ENCODE measurements at regions of chr6 and their contacts with region 1.

Region 1: GRCh38 chr6:86218446-86218845 is 575.8 kb upstream of the SYNCRIP start:
- DNase-seq: no peak
- ATAC-seq: no peak
- H3K4me3 ChIP-seq: no peak overlapping the region
- H3K4me3 Mint-ChIP-seq: no peak overlapping the region
- H3K27ac ChIP-seq: no peak overlapping the region
- H3K27ac Mint-ChIP-seq: no peak overlapping the region
- H3K4me1 ChIP-seq: no peaks in the 10 kb centered on the region
- H3K4me1 Mint-ChIP-seq: no peaks in the 10 kb centered on the region
- H3K27me3 ChIP-seq: no peaks in the 10 kb centered on the region
- H3K27me3 Mint-ChIP-seq: no peaks in the 10 kb centered on the region
- CTCF ChIP-seq: no peak

Region 2: GRCh38 chr6:86203044-86203443 is 15.4 kb before region 1 on chr6:
- CTCF ChIA-PET with region 1: no interaction called
- POLR2A ChIA-PET with region 1: no interaction called
- intact Hi-C with region 1: no loop called
- DNase-seq: no peak
- ATAC-seq: no peak
- H3K4me3 ChIP-seq: no peak overlapping the region
- H3K4me3 Mint-ChIP-seq: no peak overlapping the region
- H3K27ac ChIP-seq: no peak overlapping the region
- H3K27ac Mint-ChIP-seq: no peak overlapping the region
- H3K4me1 ChIP-seq: no peaks in the 10 kb centered on the region
- H3K4me1 Mint-ChIP-seq: no peaks in the 10 kb centered on the region
- H3K27me3 ChIP-seq: no peaks in the 10 kb centered on the region
- H3K27me3 Mint-ChIP-seq: peaks cover 1% of the 10 kb centered on the region
- CTCF ChIP-seq: no peak

Region 3: GRCh38 chr6:86256615-86257187 is 38.3 kb after region 1 on chr6:
- CTCF ChIA-PET with region 1: no interaction called
- POLR2A ChIA-PET with region 1: no interaction called
- intact Hi-C with region 1: loop called in 1 of 2 experiments (anchors 1 kb)
- DNase-seq: no peak
- ATAC-seq: no peak
- H3K4me3 ChIP-seq: no peak overlapping the region
- H3K4me3 Mint-ChIP-seq: no peak overlapping the region
- H3K27ac ChIP-seq: no peak overlapping the region
- H3K27ac Mint-ChIP-seq: no peak overlapping the region
- H3K4me1 ChIP-seq: no peaks in the 10 kb centered on the region
- H3K4me1 Mint-ChIP-seq: no peaks in the 10 kb centered on the region
- H3K27me3 ChIP-seq: no peaks in the 10 kb centered on the region
- H3K27me3 Mint-ChIP-seq: no peaks in the 10 kb centered on the region
- CTCF ChIP-seq: no peak